T-cell (primary cell): ENCODE measurements at regions of chr4 and their contacts with region 1.

Region 1: GRCh38 chr4:184514121-184514988 is 40.0 kb upstream of the IRF2 start:
- DNase-seq: peak in 1 of 35 experiments; percentile 14
- ATAC-seq: peak in 3 of 4 experiments; percentile 60 to 80 (median 70)
- H3K4me3 ChIP-seq: no peak overlapping the region
- H3K4me3 Mint-ChIP-seq: peak overlapping the region; percentile 1 to 10 (median 6)
- H3K27ac ChIP-seq: no peak overlapping the region
- H3K27ac Mint-ChIP-seq: peak overlapping the region; percentile 17 to 69
- H3K4me1 ChIP-seq: peaks cover 0 to 9% of the 10 kb centered on the region in 2 experiments
- H3K4me1 Mint-ChIP-seq: peaks cover 15 to 20% (median 18%) of the 10 kb centered on the region in 3 donors
- H3K27me3 ChIP-seq: no peaks in the 10 kb centered on the region
- H3K27me3 Mint-ChIP-seq: no peaks in the 10 kb centered on the region

Region 2: DNA sequence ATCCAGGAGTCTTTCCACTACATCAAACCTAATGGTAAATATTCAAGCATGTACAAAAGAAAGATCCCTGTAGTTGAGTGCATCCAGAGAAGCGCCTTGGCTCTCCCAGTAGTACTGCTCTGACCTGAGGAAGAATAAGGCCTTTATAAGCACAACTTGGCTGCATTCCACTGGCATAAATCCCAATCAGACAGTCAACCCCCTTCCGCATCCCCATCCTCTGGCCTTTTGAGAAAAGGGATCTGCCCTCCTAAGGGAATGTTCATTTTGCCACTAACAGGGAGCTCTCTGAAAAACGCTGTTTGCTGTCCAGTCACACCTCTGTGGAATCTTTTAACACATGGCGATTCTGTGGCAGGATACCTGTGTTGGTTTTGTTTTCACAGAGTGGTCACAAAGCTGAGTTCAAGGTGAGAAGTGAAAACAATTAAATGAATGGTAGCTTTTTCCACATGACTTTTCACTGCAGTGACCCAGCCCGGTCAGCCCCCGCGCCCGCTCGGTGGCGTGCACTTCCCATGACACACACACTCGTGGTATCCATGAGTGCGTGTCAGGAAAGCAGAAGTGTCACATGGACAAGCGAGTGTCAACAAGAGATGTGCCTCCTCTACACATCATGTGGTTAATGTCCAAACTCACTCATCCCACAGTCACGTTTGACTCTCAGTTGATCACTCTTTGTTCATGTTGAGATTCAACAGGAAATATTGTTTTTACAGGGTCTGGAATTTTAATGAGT is 184.5 kb before region 1 on chr4:
- CTCF ChIA-PET with region 1: no interaction called
- POLR2A ChIA-PET with region 1: no interaction called
- DNase-seq: peak in 3 of 35 experiments; percentile 5 to 19 (median 8)
- ATAC-seq: no peak
- H3K4me3 ChIP-seq: no peak overlapping the region
- H3K4me3 Mint-ChIP-seq: no peak overlapping the region
- H3K27ac ChIP-seq: no peak overlapping the region
- H3K27ac Mint-ChIP-seq: no peak overlapping the region
- H3K4me1 ChIP-seq: peaks cover 4 to 5% of the 10 kb centered on the region in 2 experiments
- H3K4me1 Mint-ChIP-seq: peaks cover 11 to 23% (median 11%) of the 10 kb centered on the region in 3 donors
- H3K27me3 ChIP-seq: no peaks in the 10 kb centered on the region
- H3K27me3 Mint-ChIP-seq: no peaks in the 10 kb centered on the region

Region 3: DNA sequence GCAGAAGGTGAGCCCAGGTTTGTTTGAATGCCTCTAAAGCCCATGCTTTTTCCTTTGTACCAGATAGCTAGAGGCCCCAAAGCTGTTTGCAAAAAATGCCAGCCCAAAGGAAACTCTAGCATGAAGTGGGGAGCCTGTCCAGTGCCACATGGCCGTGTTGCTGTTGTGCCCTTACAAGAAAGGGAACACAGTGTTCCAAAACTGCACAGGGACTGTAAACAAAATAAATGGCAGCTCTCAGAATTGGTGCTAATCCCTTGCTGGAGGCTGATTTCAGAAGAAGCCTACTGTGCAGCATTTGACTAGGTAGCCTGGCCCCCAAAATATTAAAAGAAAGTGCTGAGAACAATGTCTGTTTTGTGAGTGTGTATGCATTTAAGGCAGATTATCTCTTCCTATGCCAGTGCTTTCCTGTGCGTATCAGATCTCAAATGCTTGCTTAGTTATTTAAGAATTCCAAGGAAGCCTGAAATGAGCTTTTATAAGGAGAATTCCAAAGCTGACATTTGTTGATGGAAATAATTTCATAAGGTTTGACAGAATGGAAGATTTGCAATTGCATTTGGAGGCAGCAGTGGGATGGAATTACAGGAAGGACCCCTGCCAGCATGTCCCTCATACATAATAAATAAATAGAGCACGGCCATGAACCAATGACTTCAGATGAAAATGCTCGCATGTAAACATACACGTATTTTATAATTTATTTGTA is 155.7 kb before region 1 on chr4:
- CTCF ChIA-PET with region 1: no interaction called
- POLR2A ChIA-PET with region 1: interaction called in 1 of 2 experiments, 10 read pairs
- DNase-seq: no peak
- ATAC-seq: no peak
- H3K4me3 ChIP-seq: no peak overlapping the region
- H3K4me3 Mint-ChIP-seq: no peak overlapping the region
- H3K27ac ChIP-seq: no peak overlapping the region
- H3K27ac Mint-ChIP-seq: no peak overlapping the region
- H3K4me1 ChIP-seq: peaks cover 4 to 13% of the 10 kb centered on the region in 2 experiments
- H3K4me1 Mint-ChIP-seq: peaks cover 10 to 12% (median 11%) of the 10 kb centered on the region in 3 donors
- H3K27me3 ChIP-seq: no peaks in the 10 kb centered on the region
- H3K27me3 Mint-ChIP-seq: no peaks in the 10 kb centered on the region

Region 4: DNA sequence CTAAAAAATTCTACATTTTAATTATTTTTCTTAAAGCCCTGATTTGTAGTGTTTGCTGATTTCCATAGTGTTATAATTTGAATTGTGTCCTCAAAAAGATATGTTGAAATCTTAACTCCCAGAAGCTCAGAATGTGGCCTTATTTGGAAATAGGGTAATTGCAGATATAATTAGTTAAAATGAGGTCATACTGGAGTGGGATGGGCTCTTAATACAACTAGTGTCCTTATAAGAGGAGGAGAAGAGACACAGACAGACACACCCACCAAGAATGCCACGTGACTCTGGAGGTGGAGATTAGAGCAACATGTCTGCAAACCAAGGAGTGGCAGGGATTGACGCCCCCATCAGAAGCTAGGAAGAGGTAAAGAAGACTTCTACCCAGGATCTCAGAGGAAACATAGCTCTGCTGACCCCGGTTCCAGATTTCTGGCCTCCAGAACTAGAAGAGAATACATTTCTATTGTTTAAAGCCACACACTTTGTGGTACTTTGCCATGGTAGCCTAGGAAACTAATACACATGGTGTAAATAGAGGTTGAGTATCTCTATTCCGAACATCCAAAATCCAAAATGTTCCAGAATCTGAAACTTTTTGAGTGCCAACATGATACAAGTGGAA is 30.5 kb after region 1 on chr4:
- CTCF ChIA-PET with region 1: no interaction called
- POLR2A ChIA-PET with region 1: no interaction called
- DNase-seq: no peak
- ATAC-seq: no peak
- H3K4me3 ChIP-seq: no peak overlapping the region
- H3K4me3 Mint-ChIP-seq: no peak overlapping the region
- H3K27ac ChIP-seq: no peak overlapping the region
- H3K27ac Mint-ChIP-seq: no peak overlapping the region
- H3K4me1 ChIP-seq: peaks cover 11 to 17% of the 10 kb centered on the region in 2 experiments
- H3K4me1 Mint-ChIP-seq: peaks cover 6 to 21% (median 19%) of the 10 kb centered on the region in 3 donors
- H3K27me3 ChIP-seq: peaks cover 0 to 5% of the 10 kb centered on the region in 2 experiments
- H3K27me3 Mint-ChIP-seq: no peaks in the 10 kb centered on the region